ENCODE measurements at regions of chr1 and their contacts with region 1.

Region 1: GRCh38 chr1:46036894-46037839 is 95.3 kb downstream of the PIK3R3 start:
- DNase-seq: peak; percentile 92
- ATAC-seq: peak; percentile 85

Region 2: GRCh38 chr1:45929257-45929687 is 107.9 kb before region 1 on chr1:
- intact Hi-C with region 1: no loop called
- DNase-seq: no peak
- ATAC-seq: no peak

Region 3: DNA sequence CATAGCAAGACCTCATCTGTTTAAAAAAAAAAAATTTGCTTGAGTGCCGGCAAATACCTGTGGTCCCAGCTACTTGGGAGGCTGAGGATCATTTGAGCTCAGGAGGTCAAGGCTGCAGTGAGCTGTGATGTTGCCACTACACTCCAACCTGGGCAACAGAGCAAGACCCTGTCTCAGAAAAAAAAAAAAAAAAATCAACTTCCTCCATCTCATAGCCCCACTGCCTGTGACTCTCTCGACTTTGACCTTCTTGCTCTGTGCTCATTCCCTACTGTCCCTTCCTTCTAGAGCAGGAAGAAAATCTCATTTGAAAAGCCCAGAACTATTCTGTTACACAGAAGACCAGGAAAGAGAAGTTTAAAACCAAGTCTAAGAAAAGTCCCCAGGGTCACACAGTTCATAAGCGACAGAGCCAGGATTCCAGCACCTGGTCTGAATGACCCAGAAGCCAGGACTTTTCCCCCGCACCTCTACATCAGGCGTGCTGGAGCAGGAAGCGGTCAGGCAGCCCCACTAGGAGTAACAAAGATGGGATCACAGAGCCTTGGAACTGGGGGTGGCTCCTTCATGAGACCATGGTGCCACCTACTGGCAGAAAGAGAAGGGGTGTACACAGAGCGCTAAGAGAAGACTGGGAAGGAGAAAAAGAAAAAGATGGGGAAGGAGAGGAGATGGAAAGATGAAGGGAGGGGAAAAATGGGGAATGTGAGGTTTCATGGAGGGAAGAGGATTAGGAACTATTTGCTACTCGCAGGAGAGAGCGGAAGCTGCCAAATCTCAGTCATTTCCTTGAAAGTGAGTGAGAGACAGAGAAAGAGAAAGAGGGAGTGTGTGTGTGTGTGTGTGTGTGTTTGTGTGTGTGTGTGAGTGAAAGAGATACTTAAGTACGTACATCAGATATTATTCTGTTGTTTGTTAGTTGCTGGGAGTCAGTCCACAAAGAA is 142.2 kb after region 1 on chr1:
- intact Hi-C with region 1: loop called (anchors 2 kb)
- DNase-seq: peak; percentile 88
- ATAC-seq: peak; percentile 94

Region 4: DNA sequence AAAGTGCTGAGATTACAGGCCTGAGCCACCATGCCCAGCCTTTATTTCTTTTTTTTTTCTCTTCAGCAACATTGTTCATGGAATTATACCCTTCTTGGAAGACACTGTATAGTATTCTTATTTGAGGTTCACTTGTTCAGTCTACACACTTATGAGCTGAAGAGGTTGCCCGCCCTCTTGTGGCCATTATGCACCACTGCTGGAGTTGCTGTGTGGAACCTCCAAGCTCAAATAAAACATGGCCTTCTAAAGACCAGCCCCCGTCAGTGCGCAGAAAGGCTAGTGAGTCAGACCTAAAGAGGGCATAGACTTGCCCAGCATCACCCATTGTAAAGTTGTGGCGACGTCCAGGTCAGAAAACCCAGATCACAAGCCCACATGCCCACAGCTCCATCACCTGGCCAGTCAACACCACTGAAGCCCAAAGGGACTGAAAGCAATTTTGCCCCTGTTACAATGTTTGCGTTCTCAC is 186.3 kb after region 1 on chr1:
- intact Hi-C with region 1: loop called (anchors 5 kb)
- DNase-seq: peak; percentile 77
- ATAC-seq: peak; percentile 88

Region 5: DNA sequence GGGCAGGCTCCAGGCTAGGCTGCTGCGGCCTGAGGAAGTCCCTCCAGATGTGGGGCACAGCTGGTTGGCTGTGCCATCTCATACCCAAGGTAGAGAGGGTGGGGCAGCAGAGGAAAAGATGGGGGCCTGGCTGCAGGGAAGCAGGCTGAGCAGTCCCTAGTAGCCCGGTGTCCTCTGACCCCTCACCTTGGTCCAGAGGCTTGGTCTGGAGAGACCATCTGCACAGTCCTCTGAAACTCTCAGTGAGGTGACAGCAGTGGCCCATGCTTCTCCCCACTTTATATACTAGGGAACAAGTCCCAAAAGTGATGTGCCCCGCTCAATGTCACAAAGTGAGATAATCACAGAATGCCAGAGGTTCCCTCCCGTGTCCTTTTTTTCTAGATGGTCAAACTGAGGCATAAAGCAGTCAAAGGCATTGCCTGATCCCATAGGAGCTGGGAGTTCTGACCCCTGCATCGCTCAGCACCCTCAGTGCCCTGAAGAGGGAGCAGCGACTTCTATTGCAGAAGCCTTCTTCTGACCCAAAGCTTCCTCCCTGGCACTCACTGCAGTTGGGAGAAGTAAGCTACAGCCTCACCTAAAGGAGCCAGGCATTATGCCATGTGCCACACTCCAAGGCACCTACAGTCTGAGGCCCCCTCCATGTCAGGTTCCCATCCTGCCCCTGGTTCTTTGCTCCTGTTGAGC is 1914.5 kb after region 1 on chr1:
- intact Hi-C with region 1: no loop called
- DNase-seq: no peak
- ATAC-seq: peak; percentile 21